PC-9 (cell line): ENCODE measurements at regions of chr22 and their contacts with region 1.

Region 1: GRCh38 chr22:40856513-40857308 is at the starts of genes ST13 and XPNPEP3:
- DNase-seq: peak; percentile 92 to 95
- H3K4me3 ChIP-seq: peak within 1 kb of the TSS; percentile 98
- H3K27ac ChIP-seq: peak within 1 kb of the TSS; percentile 88
- H3K4me1 ChIP-seq: peaks cover 43% of the 10 kb centered on the region
- H3K27me3 ChIP-seq: no peaks in the 10 kb centered on the region
- CTCF ChIP-seq: peak; percentile 53
- total RNA-seq, gene ST13: 285 and 303 TPM in 2 replicates
- total RNA-seq, gene XPNPEP3: 34.3 and 42.7 TPM in 2 replicates

Region 2: GRCh38 chr22:40818747-40819598 is 37.7 kb before region 1 on chr22 and contains the start of gene SLC25A17:
- CTCF ChIA-PET with region 1: no interaction called
- POLR2A ChIA-PET with region 1: interaction called, 10 read pairs
- intact Hi-C with region 1: no loop called
- DNase-seq: peak; percentile 78 to 85
- H3K4me3 ChIP-seq: peak within 1 kb of the TSS; percentile 98
- H3K27ac ChIP-seq: peak within 1 kb of the TSS; percentile 45
- H3K4me1 ChIP-seq: peaks cover 20% of the 10 kb centered on the region
- H3K27me3 ChIP-seq: no peaks in the 10 kb centered on the region
- CTCF ChIP-seq: peak; percentile 42; the same call in 1 of the 2 replicates
- total RNA-seq, gene SLC25A17: 25.0 and 28.1 TPM in 2 replicates

Region 3: DNA sequence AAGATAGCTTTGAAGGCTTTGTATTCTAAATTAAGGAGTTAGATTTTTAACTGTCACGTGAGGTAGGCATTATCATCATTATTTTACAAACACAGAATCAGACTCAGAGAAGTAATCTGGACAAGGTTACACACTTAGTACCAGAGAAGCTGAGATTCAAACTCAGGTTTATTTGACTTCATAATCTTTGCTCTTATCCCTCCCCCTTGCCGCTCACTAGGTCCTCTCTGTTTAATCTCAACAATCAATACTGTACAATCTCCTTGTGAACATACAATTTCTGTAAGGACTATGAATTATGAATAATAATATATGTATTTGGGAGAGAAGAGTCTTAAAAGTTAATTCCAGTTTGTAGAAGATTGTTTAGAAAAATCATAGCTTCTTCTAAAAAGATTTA is 10.4 kb after region 1 on chr22:
- CTCF ChIA-PET with region 1: no interaction called
- POLR2A ChIA-PET with region 1: interaction called, 14 read pairs
- intact Hi-C with region 1: no loop called
- DNase-seq: no peak
- H3K4me3 ChIP-seq: no peak overlapping the region
- H3K27ac ChIP-seq: no peak overlapping the region; the same call in 1 of the 2 replicates
- H3K4me1 ChIP-seq: no peaks in the 10 kb centered on the region
- H3K27me3 ChIP-seq: no peaks in the 10 kb centered on the region
- CTCF ChIP-seq: no peak

Region 4: DNA sequence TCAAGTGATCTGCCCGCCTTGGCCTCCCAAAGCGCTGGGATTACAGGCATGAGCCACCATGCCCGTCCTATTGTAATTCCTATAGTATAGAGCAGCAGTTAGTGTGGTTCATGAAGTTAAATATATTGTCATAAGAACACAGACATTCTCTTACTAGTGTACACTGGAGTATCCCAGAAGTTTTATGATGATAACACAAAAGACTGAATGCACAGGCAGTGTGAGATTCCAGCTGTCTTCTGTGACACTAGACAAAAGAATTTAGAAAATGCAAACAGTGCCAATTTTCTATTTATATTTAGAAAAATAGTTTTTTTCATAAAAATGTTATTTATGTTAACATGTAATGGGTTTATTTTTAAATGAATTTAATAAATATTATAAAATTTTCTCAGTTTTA is 55.1 kb after region 1 on chr22:
- CTCF ChIA-PET with region 1: interaction called, 16 read pairs
- POLR2A ChIA-PET with region 1: no interaction called
- intact Hi-C with region 1: no loop called
- DNase-seq: no peak
- H3K4me3 ChIP-seq: no peak overlapping the region
- H3K27ac ChIP-seq: no peak overlapping the region
- H3K4me1 ChIP-seq: no peaks in the 10 kb centered on the region
- H3K27me3 ChIP-seq: no peaks in the 10 kb centered on the region
- CTCF ChIP-seq: no peak

Region 5: DNA sequence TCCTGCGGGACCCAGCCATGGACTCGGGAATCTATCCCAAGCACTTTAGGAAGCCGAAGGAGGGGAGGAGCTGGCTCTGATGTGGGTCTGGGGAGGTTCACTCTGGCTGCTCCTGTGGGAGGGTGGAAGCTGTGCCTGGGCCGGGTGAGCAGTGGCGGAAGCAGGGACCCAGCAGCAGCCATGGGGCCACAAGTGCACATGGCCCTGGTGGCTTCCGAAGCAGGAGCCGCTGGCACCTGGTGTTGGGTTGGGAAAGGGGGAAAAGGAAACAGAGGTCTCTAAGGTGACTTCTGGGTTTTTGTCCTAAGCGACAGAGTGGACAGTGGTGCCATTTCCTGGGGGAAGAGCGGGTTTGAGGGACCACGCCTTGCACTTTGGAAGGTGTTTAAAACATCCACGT is 133.7 kb after region 1 on chr22:
- CTCF ChIA-PET with region 1: no interaction called
- POLR2A ChIA-PET with region 1: no interaction called
- intact Hi-C with region 1: no loop called
- DNase-seq: no peak
- H3K4me3 ChIP-seq: no peak overlapping the region
- H3K27ac ChIP-seq: no peak overlapping the region
- H3K4me1 ChIP-seq: no peaks in the 10 kb centered on the region
- H3K27me3 ChIP-seq: no peaks in the 10 kb centered on the region
- CTCF ChIP-seq: no peak

Region 6: GRCh38 chr22:41009202-41009943 is 152.7 kb after region 1 on chr22:
- CTCF ChIA-PET with region 1: no interaction called
- POLR2A ChIA-PET with region 1: no interaction called
- intact Hi-C with region 1: no loop called
- DNase-seq: peak; percentile 51 to 77
- H3K4me3 ChIP-seq: no peak overlapping the region
- H3K27ac ChIP-seq: peak overlapping the region; percentile 44
- H3K4me1 ChIP-seq: peaks cover 18% of the 10 kb centered on the region
- H3K27me3 ChIP-seq: no peaks in the 10 kb centered on the region
- CTCF ChIP-seq: no peak